Motor neuron (in vitro differentiated cells): ENCODE measurements at regions of chr2 and their contacts with region 1.

Region 1: DNA sequence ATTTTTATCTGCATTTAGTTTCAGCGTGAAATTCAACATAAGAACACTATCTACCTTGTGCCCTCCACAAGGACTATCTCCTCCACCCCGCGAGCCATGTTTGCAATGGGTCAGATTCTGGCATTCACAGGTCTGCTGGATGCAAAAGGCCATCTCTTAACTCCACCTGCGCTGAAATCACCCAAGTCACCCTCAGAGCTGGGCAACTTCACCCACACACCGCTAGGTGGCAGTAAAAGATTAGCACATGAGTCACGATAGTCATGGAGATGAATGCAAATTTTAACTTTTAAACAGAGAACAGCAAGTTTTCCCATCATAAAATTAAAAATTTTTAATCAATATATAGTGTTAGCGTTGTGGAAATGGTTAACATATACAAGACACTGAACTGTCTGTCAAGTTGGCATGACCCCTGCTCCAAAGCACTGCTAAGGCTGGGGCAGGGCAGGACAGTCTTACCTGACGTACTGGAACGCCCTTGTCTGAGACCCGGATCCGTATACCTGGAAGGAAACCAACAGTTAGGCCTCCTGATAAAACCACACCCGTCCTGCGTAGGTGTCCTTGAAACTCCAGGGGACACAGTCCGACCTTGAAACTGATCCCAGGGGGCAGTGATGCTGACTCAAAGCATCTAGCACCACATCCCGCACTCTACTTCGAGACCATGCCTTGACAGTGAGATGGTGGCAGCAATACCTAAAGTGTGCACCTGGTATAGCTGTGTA is 89.6 kb downstream of the UXS1 start:
- ATAC-seq: peak in 6 of 8 experiments; percentile 58 to 82 (median 70)
- H3K4me3 ChIP-seq: no peak overlapping the region
- H3K27ac ChIP-seq: no peak overlapping the region
- H3K4me1 ChIP-seq: peaks cover 6 to 9% of the 10 kb centered on the region in 2 donors

Region 2: DNA sequence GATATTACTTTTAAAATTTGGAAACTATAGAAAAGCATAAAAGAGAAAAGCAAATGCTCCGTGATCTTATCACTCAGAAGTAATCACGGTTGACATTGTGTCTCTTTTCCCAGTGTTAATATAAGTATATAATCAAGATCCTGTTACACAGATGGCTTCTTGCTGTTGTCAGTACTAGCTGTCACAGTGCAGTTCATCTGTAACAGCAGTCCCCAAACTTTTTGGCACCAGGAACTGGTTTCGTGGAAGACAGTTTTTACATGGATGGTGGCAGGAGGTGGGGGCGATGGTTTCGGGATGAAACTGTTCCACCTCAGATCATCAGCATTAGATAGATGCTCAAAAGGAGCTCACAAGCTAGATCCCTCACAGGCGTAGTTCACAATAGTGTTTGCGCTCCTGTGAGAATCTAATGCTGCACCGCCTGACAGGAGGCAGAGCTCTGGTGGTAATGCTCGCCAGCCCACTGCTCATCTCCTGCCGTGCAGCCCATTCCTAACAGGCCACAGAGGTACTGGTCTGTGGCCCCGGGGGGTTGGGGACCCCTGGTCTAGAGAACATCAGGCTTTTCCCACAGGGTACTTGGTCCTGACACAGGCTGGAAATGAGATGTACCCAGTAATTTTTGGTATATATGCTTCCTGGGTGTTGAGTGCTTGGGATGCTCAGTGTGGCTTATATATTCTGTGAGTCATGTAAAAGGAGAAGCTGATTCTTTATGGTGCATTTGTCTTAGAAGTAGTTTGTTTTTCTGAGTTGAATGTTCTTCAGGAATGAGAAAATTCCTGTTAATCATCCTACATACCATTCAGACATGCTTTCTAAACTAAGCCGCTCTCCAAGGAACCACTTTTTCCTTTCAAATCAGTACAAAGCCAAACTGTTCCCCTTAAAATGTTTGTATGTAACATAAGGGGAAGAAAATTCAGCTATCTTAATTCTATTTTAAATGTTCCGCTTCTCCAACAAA is 238.0 kb before region 1 on chr2:
- in situ Hi-C with region 1: no loop called
- ATAC-seq: peak in 1 of 8 experiments; percentile 46
- H3K4me3 ChIP-seq: no peak overlapping the region
- H3K27ac ChIP-seq: no peak overlapping the region
- H3K4me1 ChIP-seq: peaks cover 0 to 2% of the 10 kb centered on the region in 2 donors

Region 3: GRCh38 chr2:106542811-106543259 is 438.3 kb after region 1 on chr2:
- in situ Hi-C with region 1: loop called in 3 of 9 experiments (anchors 25 kb)
- ATAC-seq: peak; percentile 75 to 97 (median 81)
- H3K4me3 ChIP-seq: peak overlapping the region in 2 of 5 donors; percentile 12 to 18
- H3K27ac ChIP-seq: no peak overlapping the region
- H3K4me1 ChIP-seq: peaks cover 0 to 3% of the 10 kb centered on the region in 2 donors

Region 4: GRCh38 chr2:106572541-106573450 is 468.3 kb after region 1 on chr2:
- in situ Hi-C with region 1: loop called in 2 of 9 experiments (anchors 25 kb)
- ATAC-seq: no peak
- H3K4me3 ChIP-seq: no peak overlapping the region
- H3K27ac ChIP-seq: no peak overlapping the region
- H3K4me1 ChIP-seq: peaks cover 6 to 11% of the 10 kb centered on the region in 2 donors

Region 5: GRCh38 chr2:106582148-106583143 is 477.9 kb after region 1 on chr2:
- in situ Hi-C with region 1: loop called in 1 of 9 experiments (anchors 25 kb)
- ATAC-seq: peak; percentile 94 to 99 (median 96)
- H3K4me3 ChIP-seq: peak overlapping the region; percentile 6 to 29 (median 23)
- H3K27ac ChIP-seq: no peak overlapping the region
- H3K4me1 ChIP-seq: peaks cover 18 to 29% of the 10 kb centered on the region in 2 donors